Naive thymus-derived CD4-positive, alpha-beta T cell (primary cell): ENCODE measurements at regions of chrX and their contacts with region 1.

Region 1: DNA sequence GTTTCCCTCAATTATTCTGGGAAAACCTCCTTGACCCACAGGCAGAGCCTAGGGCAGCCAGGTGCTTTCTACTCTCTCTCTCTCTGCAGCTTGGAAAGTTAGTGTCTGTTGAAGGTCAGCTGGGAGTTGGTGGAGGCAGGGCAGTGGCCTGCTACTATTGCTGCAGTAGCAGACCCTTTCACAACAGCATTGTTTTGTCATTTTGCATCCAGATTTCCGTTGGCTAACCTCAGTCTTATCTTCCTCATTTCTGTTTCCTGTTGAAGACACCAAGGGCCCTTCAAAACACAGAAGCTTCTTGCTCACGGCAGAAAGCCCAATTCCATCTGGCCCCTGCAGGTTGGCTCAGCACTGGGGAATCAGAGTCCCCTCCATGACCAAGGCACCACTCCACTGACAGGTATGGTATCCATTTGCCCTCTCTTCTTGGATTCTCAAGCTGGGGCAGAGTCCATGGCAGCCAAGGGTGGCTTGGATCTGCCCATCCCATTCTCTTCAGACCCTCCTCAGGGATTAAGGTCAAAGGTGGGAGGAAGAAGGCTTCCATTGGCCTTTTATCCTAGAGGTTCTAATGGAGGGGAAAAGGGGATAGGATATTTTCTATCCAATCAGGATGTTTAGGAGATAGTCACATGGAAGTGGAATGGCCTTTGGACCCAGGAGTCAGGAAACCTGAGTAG is 24.6 kb downstream of the VSIG4 start:
- DNase-seq: peak in 1 of 9 donors; percentile 20
- ATAC-seq: peak; percentile 68
- H3K4me3 ChIP-seq: peak overlapping the region; percentile 38
- H3K4me3 Mint-ChIP-seq: peak overlapping the region; percentile 18 to 88 (median 72)
- H3K27ac ChIP-seq: no peak overlapping the region
- H3K27ac Mint-ChIP-seq: peak overlapping the region; percentile 36 to 89 (median 77)
- H3K4me1 ChIP-seq: peaks cover 33 to 52% of the 10 kb centered on the region in 2 donors
- H3K4me1 Mint-ChIP-seq: peaks cover 38 to 94% (median 91%) of the 10 kb centered on the region in 7 donors
- H3K27me3 ChIP-seq: no peaks in the 10 kb centered on the region
- H3K27me3 Mint-ChIP-seq: no peaks in the 10 kb centered on the region

Region 2: GRCh38 chrX:65894133-65894532 is 121.2 kb before region 1 on chrX:
- CTCF ChIA-PET with region 1: no interaction called
- POLR2A ChIA-PET with region 1: no interaction called
- intact Hi-C with region 1: no loop called
- DNase-seq: no peak
- ATAC-seq: no peak
- H3K4me3 ChIP-seq: no peak overlapping the region
- H3K4me3 Mint-ChIP-seq: no peak overlapping the region
- H3K27ac ChIP-seq: no peak overlapping the region
- H3K27ac Mint-ChIP-seq: no peak overlapping the region
- H3K4me1 ChIP-seq: peaks cover 0 to 4% of the 10 kb centered on the region in 2 donors
- H3K4me1 Mint-ChIP-seq: peaks cover 7 to 25% (median 16%) of the 10 kb centered on the region in 7 donors
- H3K27me3 ChIP-seq: no peaks in the 10 kb centered on the region
- H3K27me3 Mint-ChIP-seq: no peaks in the 10 kb centered on the region

Region 3: GRCh38 chrX:65999563-66000148 is 15.6 kb before region 1 on chrX:
- CTCF ChIA-PET with region 1: no interaction called
- POLR2A ChIA-PET with region 1: interaction called, 4 read pairs
- intact Hi-C with region 1: loop called in 1 of 2 experiments (anchors 2 kb)
- DNase-seq: no peak
- ATAC-seq: no peak
- H3K4me3 ChIP-seq: no peak overlapping the region
- H3K4me3 Mint-ChIP-seq: peak overlapping the region in 7 of 10 donors; percentile 11 to 78 (median 37)
- H3K27ac ChIP-seq: no peak overlapping the region
- H3K27ac Mint-ChIP-seq: peak overlapping the region in 6 of 9 donors; percentile 28 to 74 (median 61)
- H3K4me1 ChIP-seq: peaks cover 1 to 53% of the 10 kb centered on the region in 2 donors
- H3K4me1 Mint-ChIP-seq: peaks cover 28 to 65% (median 56%) of the 10 kb centered on the region in 7 donors
- H3K27me3 ChIP-seq: no peaks in the 10 kb centered on the region
- H3K27me3 Mint-ChIP-seq: no peaks in the 10 kb centered on the region

Region 4: DNA sequence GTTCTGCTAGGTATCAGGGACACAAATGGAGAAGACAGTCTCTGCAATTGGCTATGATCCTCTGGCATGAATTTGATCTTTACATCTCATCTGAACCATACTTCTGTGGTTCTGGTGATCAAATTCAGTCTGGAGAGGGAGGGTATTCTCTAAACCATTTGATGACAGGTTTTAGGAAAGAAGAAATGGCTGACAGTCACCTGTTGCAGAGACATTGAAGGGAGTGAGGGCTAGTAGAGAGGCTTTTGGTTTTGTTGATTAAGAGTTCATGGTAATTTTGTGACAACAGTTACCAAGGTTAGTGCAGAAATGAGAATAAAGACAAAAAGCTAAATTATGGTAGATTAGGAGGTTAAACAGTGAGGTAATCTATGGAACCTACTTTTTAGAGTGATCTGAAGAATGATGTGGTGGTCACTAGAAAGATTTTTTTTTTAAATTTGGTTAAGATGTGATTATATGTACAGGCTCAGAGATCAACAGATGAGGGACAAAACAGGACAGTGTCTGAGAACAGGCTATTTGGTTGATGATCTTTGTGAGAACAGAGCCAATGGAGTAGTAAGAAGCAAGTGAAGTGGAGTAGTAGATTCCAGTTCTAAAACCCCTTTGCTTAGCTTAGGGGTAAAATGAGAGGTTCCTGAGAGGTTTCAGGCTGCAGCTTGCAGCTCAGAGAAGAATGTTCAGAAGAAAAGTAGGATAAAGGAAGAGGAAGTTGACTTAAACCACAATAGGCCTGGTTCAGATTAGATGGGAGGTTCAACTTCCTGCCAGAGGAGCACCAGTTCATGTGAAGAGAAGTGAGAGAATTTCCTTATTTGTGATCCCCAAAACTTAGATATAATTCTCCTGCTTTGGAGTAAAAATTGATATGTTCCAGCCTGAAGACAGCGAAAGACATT is 10.1 kb before region 1 on chrX:
- CTCF ChIA-PET with region 1: no interaction called
- POLR2A ChIA-PET with region 1: interaction called, 5 read pairs
- intact Hi-C with region 1: loop called (anchors 1 to 2 kb)
- DNase-seq: peak in 6 of 9 donors; percentile 15 to 39 (median 25)
- ATAC-seq: peak; percentile 68
- H3K4me3 ChIP-seq: peak overlapping the region; percentile 19
- H3K4me3 Mint-ChIP-seq: peak overlapping the region; percentile 25 to 82 (median 66)
- H3K27ac ChIP-seq: peak overlapping the region; percentile 47
- H3K27ac Mint-ChIP-seq: peak overlapping the region; percentile 52 to 90 (median 87)
- H3K4me1 ChIP-seq: peaks cover 18 to 60% of the 10 kb centered on the region in 2 donors
- H3K4me1 Mint-ChIP-seq: peaks cover 35 to 77% (median 73%) of the 10 kb centered on the region in 7 donors
- H3K27me3 ChIP-seq: no peaks in the 10 kb centered on the region
- H3K27me3 Mint-ChIP-seq: no peaks in the 10 kb centered on the region